ENCODE measurements at regions of chr4 and their contacts with region 1.

Region 1: DNA sequence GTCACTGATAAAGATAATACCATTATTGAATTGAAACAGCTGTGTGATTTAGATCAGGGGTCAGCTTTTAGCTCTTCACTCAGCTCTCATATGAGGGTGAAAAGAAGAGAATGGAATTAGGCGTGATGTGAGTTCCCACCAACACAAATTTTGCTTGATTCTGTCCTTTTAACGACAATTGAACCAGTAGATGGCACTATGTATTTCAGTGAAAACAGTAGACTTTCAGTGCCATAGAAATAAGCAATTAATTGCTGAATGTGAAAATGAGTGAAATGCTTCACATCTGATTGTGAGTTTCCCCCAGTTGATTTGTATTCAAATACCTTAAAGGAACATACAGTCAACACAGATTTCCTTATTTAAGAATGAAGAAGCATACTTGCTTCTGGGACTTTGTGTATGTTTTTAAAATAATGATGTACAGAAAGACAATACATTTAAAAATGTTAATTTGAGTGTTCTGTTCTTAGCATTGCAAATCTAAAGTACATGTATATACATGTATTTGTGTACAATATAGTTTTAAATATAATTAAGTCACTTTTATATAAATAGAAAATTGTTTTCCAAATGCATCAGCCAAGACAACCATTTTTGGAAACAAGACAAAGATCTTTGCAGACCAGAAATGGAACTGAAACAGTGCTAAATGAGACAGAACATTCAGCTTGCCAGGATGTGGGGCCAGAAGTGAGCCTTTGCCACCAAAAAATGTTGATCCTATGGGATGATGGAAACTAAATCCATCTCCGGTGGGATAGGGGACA is 178.8 kb downstream of the SNCA start:
- DNase-seq: no peak
- H3K4me3 ChIP-seq: no peak overlapping the region
- H3K27me3 ChIP-seq: no peaks in the 10 kb centered on the region
- CTCF ChIP-seq: peak; percentile 49

Region 2: DNA sequence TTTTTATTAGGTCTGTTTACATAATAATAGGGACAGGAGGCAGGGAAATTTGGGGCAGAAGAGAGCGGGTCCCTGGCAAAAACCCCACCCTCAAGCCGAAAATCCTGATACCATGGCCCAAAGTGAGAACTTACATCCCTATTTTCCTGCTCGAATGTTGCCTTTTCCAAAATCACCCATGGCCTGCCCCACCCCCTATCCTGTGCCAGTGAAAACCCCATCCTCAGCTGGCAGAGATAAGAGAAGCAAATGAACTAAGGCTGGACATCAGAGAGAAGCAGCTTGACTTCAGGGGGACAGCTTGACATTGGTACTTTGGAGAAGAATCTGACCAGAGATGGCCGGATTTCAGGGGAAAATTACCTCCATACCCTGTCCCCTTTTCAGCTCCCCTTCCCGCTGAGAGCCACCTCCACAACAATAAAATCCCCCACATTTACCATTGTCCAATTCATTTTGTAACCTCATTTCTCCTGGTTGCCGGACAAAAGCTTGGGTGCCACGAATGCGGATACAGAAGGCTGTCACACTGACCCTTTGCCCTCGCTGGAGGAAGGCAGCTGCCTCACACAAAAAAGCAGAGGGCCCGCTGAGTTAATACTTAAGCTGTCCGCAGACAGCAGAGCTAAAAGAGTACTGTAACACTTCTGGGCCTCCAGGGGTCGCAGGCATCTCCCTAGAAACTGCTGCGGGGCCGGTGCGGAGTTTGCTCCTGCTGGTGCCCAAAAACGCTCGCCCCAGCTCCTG is 17.3 kb before region 1 on chr4:
- CTCF ChIA-PET with region 1: interaction called, 10 read pairs
- POLR2A ChIA-PET with region 1: no interaction called
- DNase-seq: no peak
- H3K4me3 ChIP-seq: no peak overlapping the region
- H3K27me3 ChIP-seq: no peaks in the 10 kb centered on the region
- CTCF ChIP-seq: peak; percentile 86

Region 3: DNA sequence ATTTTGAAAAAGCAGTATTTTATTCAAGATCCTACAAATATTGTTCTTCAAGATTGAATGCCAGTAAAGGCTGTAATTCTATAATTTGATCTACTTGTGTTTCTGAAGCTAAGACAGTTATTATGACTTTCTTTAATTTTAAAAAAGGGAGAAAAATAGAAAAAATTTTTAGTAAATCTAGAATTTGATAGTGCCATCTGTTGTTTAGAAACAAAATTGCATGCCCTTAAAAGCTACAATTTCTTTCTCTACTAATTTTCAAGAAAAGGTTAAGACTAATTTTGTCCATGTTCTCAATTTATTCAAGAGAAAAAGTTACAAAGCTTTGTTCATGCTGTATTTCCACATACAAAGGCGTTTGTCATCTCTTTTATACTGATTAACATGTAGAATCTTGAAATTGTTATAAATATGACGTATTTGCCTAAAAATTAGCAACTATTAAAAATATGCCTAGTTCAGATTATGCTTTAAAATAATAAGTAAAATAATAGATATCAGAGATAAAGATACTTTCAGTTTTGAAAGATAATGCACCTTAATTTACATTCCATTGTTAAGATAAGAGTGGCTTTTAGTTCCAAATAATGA is 211.0 kb after region 1 on chr4:
- CTCF ChIA-PET with region 1: interaction called, 19 read pairs
- POLR2A ChIA-PET with region 1: no interaction called
- DNase-seq: no peak
- H3K4me3 ChIP-seq: no peak overlapping the region
- H3K27me3 ChIP-seq: no peaks in the 10 kb centered on the region
- CTCF ChIP-seq: peak; percentile 42